PC-9 (cell line): ENCODE measurements at regions of chrX and their contacts with region 1.

Region 1: GRCh38 chrX:136725446-136726104 is 55.2 kb downstream of the ARHGEF6 start:
- DNase-seq: peak in 1 of 2 experiments; percentile 62
- H3K4me3 ChIP-seq: no peak overlapping the region
- H3K27ac ChIP-seq: no peak overlapping the region
- H3K4me1 ChIP-seq: peaks cover 8% of the 10 kb centered on the region; the same call in 1 of the 2 replicates
- H3K27me3 ChIP-seq: no peaks in the 10 kb centered on the region
- CTCF ChIP-seq: no peak

Region 2: GRCh38 chrX:136665258-136665900 is 60.2 kb before region 1 on chrX:
- CTCF ChIA-PET with region 1: no interaction called
- POLR2A ChIA-PET with region 1: no interaction called
- intact Hi-C with region 1: no loop called
- DNase-seq: no peak
- H3K4me3 ChIP-seq: no peak overlapping the region
- H3K27ac ChIP-seq: no peak overlapping the region
- H3K4me1 ChIP-seq: no peaks in the 10 kb centered on the region
- H3K27me3 ChIP-seq: no peaks in the 10 kb centered on the region
- CTCF ChIP-seq: no peak

Region 3: DNA sequence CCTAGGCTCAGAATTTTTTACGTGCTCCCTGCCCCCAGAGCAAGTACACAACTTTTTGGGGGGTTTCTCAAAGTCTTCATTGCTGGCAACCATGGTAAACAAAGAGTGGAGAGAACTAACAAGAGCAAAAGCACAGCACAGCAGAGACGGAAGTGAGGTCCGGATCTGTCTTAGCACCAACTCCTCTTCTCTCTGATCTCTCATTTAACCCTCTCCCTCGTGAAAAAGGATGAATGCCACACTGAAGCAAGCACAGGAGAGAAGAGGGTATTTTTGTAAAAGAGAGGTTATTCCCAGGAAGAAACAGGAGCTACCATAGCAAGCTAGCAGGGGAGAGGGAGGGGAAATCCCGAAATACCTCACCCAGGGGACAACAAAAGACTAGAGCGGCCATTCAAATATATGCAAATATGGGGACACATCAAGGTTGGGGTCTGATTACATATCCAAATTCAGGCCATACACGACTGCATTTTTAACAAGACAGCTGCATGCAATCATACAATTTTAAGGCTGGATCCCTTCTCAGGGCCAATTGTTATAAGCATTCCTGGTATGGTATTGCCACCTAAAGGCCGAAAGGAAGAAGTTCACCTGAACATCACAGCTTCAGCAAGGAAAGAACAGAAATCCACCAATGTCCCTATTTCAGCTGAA is 31.0 kb before region 1 on chrX:
- CTCF ChIA-PET with region 1: no interaction called
- POLR2A ChIA-PET with region 1: no interaction called
- intact Hi-C with region 1: no loop called
- DNase-seq: peak in 1 of 2 experiments; percentile 57
- H3K4me3 ChIP-seq: no peak overlapping the region
- H3K27ac ChIP-seq: no peak overlapping the region
- H3K4me1 ChIP-seq: peaks cover 17% of the 10 kb centered on the region
- H3K27me3 ChIP-seq: no peaks in the 10 kb centered on the region
- CTCF ChIP-seq: peak; percentile 90

Region 4: DNA sequence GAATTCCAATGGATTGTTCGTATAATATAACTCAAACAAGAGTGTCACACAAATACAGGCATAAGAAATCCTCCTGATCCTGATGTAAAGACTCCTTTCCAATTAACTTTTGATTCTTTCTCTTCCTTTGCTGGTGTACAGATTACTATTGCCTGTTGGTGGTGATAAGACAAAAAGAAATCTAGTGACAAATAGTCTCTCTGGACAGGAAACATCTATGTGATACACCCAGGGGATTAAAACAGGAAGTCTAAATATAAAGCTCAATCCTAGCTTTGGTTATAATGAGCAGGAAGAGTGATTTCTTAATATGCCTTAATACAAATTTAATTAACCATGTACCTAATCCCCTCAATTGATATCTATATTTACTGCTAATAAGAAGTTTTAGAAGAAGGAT is 10.0 kb after region 1 on chrX:
- CTCF ChIA-PET with region 1: no interaction called
- POLR2A ChIA-PET with region 1: no interaction called
- intact Hi-C with region 1: no loop called
- DNase-seq: no peak
- H3K4me3 ChIP-seq: no peak overlapping the region
- H3K27ac ChIP-seq: no peak overlapping the region
- H3K4me1 ChIP-seq: no peaks in the 10 kb centered on the region
- H3K27me3 ChIP-seq: no peaks in the 10 kb centered on the region
- CTCF ChIP-seq: no peak

Region 5: GRCh38 chrX:136789856-136790255 is 64.3 kb after region 1 on chrX:
- CTCF ChIA-PET with region 1: no interaction called
- POLR2A ChIA-PET with region 1: no interaction called
- intact Hi-C with region 1: loop called (anchors 1 kb)
- DNase-seq: peak in 1 of 2 experiments; percentile 63
- H3K4me3 ChIP-seq: no peak overlapping the region
- H3K27ac ChIP-seq: no peak overlapping the region
- H3K4me1 ChIP-seq: peaks cover 11% of the 10 kb centered on the region
- H3K27me3 ChIP-seq: no peaks in the 10 kb centered on the region
- CTCF ChIP-seq: no peak

Region 6: DNA sequence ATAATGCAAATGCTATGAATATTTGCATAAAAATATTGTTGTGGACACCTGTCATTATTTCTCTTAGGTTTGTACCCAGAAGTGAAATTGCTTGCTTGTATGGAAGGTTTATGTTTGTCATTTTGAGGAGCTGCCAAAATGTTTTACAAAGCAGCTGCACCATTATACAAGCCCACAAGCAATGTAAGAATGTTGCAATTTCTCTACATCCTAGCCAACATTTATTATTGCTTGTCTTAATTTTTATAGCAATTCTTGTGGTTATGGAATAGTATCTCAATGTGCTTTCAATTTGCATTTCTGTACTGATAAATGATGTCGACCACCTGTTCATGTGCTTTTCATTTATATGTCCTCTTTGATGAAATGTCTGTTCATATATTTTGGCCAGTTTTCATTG is 173.6 kb after region 1 on chrX:
- CTCF ChIA-PET with region 1: no interaction called
- POLR2A ChIA-PET with region 1: no interaction called
- intact Hi-C with region 1: no loop called
- DNase-seq: no peak
- H3K4me3 ChIP-seq: no peak overlapping the region
- H3K27ac ChIP-seq: no peak overlapping the region
- H3K4me1 ChIP-seq: no peaks in the 10 kb centered on the region
- H3K27me3 ChIP-seq: no peaks in the 10 kb centered on the region
- CTCF ChIP-seq: no peak